ENCODE measurements at regions of chrX and their contacts with region 1.

Region 1: GRCh38 chrX:41333744-41334259 is at the start of gene DDX3X:
- DNase-seq: peak in 3 of 4 experiments; percentile 61 to 89 (median 84)
- ATAC-seq: peak; percentile 76
- H3K4me3 ChIP-seq: peak within 1 kb of the TSS; percentile 97
- H3K27ac ChIP-seq: peak within 1 kb of the TSS; percentile 98
- H3K4me1 ChIP-seq: peaks cover 8 to 18% of the 10 kb centered on the region in 2 experiments; a peak in 4 of 5 replicates
- H3K27me3 ChIP-seq: no peaks in the 10 kb centered on the region; a peak in 1 of 5 replicates
- CTCF ChIP-seq: peak in 2 of 3 experiments; percentile 36 to 37; a peak in 4 of 6 replicates
- EP300 ChIP-seq: no peak
- POLR2A ChIP-seq: peak; percentile 99
- RAD21 ChIP-seq: no peak
- polyA plus RNA-seq, gene DDX3X: 51.3 to 119 TPM

Region 2: GRCh38 chrX:41350976-41351569 is 17.3 kb after region 1 on chrX:
- CTCF ChIA-PET with region 1: no interaction called
- POLR2A ChIA-PET with region 1: interaction called, 7 read pairs
- in situ Hi-C with region 1: no loop called
- intact Hi-C with region 1: loop called (anchors 2 kb)
- DNase-seq: peak in 1 of 4 experiments; percentile 14
- ATAC-seq: peak; percentile 67
- H3K4me3 ChIP-seq: no peak overlapping the region
- H3K27ac ChIP-seq: no peak overlapping the region
- H3K4me1 ChIP-seq: no peaks in the 10 kb centered on the region; a peak in 2 of 5 replicates
- H3K27me3 ChIP-seq: no peaks in the 10 kb centered on the region
- CTCF ChIP-seq: no peak
- EP300 ChIP-seq: no peak
- POLR2A ChIP-seq: peak; percentile 77
- RAD21 ChIP-seq: no peak

Region 3: GRCh38 chrX:41384041-41384705 is 50.4 kb after region 1 on chrX:
- CTCF ChIA-PET with region 1: no interaction called
- POLR2A ChIA-PET with region 1: interaction called, 7 read pairs
- in situ Hi-C with region 1: no loop called
- intact Hi-C with region 1: loop called (anchors 2 kb)
- DNase-seq: peak; percentile 53 to 80 (median 62)
- ATAC-seq: peak; percentile 93
- H3K4me3 ChIP-seq: no peak overlapping the region
- H3K27ac ChIP-seq: peak overlapping the region; percentile 81
- H3K4me1 ChIP-seq: peaks cover 0 to 19% of the 10 kb centered on the region in 2 experiments; a peak in 4 of 5 replicates
- H3K27me3 ChIP-seq: no peaks in the 10 kb centered on the region
- CTCF ChIP-seq: no peak
- EP300 ChIP-seq: peak; percentile 73
- POLR2A ChIP-seq: no peak
- RAD21 ChIP-seq: no peak

Region 4: DNA sequence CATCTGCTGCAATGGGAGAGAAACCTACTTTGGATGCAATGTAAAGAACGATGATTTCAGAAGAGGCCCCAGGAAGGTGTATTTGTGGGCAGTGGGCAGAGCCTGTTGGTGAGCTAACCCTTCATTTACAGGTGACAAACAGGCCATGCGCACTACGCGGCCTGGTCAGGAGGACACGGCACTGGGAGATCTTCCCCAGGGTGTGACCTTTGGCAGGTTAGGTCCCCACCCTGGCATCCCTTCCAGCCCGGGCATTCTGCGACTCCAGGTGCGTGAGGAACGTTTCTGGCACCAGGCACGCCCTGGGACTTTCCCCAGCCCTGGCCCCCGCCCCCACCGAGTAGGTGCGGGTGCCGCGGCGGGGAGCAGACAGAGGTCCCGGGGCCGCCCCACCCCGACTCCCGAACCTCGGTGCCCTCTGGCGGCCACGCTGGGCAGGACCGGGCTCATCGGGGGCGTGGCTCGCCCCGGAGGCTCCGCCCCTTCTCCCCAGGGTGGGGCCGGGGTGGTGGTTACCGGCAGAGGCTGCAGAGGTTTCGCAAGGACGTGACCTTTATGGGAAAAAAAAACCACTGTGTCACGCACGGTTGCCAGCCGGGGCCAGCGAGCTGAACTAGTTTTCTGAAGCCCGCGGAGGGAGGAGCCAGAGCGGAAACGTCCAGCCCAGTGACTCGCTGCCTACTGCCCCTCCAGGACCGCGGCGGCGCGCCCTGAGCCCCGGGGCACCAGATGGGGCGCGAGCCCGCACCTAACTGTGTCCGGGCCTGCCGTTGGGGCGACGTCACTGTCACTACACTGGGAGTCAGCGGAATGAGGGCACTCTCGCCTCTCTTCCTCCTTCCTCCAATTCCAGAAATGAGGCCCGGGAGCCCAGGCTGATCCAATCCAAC is 108.4 kb after region 1 on chrX:
- CTCF ChIA-PET with region 1: no interaction called
- POLR2A ChIA-PET with region 1: interaction called, 7 read pairs
- in situ Hi-C with region 1: loop called (anchors 10 kb)
- intact Hi-C with region 1: loop called (anchors 1 kb)
- DNase-seq: peak; percentile 88 to 97 (median 95)
- ATAC-seq: peak; percentile 98
- H3K4me3 ChIP-seq: peak overlapping the region; percentile 36
- H3K27ac ChIP-seq: peak overlapping the region; percentile 73
- H3K4me1 ChIP-seq: peaks cover 10 to 11% of the 10 kb centered on the region in 2 experiments; a peak in 4 of 5 replicates
- H3K27me3 ChIP-seq: no peaks in the 10 kb centered on the region
- CTCF ChIP-seq: peak; percentile 69 to 78 (median 71)
- EP300 ChIP-seq: peak; percentile 51
- POLR2A ChIP-seq: peak; percentile 56; the same call in 1 of the 2 replicates
- RAD21 ChIP-seq: peak; percentile 72 to 77